Aorta (tissue), 5 donors: ENCODE measurements at regions of chr4 and their contacts with region 1.

Region 1: GRCh38 chr4:158161551-158162354 is 11.1 kb downstream of the GASK1B start:
- DNase-seq: peak in 1 of 2 donors; percentile 73
- ATAC-seq: peak; percentile 74
- H3K4me3 ChIP-seq: peak overlapping the region in 1 of 2 donors; percentile 64
- H3K27ac ChIP-seq: peak overlapping the region; percentile 62 to 93
- H3K4me1 ChIP-seq: peaks cover 12 to 22% of the 10 kb centered on the region in 2 donors
- H3K27me3 ChIP-seq: no peaks in the 10 kb centered on the region

Region 2: GRCh38 chr4:158051401-158052235 is 110.1 kb before region 1 on chr4:
- intact Hi-C with region 1: loop called in 1 of 2 experiments (anchors 10 kb)
- DNase-seq: peak in 1 of 2 donors; percentile 56
- ATAC-seq: peak; percentile 79
- H3K4me3 ChIP-seq: no peak overlapping the region
- H3K27ac ChIP-seq: peak overlapping the region; percentile 37 to 87
- H3K4me1 ChIP-seq: peaks cover 0 to 4% of the 10 kb centered on the region in 2 donors
- H3K27me3 ChIP-seq: no peaks in the 10 kb centered on the region